Right ventricle myocardium inferior (tissue), 1 donor: ENCODE measurements at regions of chr1 and their contacts with region 1.

Region 1: DNA sequence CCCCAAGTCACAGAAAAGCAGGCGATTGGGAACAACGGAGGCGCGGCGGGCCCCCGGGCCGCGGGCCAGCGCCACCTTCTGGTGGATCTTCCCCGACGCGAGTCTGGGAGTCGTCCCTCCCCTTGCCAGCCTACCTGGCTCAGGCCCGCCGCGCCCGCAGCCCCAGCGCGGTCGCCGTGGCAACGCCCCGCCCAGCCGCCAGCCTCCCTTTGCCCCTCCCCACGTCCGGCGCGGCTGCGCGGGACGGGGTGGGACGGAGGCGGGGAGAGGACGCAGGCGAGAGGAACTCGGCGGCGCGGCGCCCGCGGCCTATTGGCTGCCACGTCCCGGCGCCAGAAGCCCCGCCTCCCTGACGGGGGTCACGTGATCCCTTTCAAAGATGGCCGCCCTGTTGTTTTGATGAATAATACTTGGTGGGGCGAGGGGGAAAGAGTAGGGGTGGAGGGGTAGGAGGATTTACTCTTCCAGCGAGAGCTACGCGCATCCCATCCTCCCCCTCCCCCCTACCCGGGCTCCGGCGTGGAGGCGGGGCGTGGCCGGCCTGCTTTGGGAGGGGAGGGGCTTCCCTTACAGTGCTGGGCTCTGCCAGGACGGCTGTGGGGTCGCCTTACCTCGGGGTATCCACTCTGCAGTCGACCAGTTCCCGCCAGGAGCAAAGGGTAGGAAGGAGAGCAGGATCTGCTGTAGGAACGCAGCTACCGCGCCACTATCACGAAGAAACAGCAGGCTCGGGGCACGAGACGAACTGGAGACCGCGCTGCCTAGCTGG is at the start of gene UBE4B:
- DNase-seq: peak; percentile 100
- ATAC-seq: peak; percentile 99
- total RNA-seq, gene UBE4B: 66.4 TPM

Region 2: GRCh38 chr1:9874959-9875635 is 157.7 kb before region 1 on chr1:
- intact Hi-C with region 1: loop called (anchors 5 kb)
- DNase-seq: no peak
- ATAC-seq: peak; percentile 67

Region 3: DNA sequence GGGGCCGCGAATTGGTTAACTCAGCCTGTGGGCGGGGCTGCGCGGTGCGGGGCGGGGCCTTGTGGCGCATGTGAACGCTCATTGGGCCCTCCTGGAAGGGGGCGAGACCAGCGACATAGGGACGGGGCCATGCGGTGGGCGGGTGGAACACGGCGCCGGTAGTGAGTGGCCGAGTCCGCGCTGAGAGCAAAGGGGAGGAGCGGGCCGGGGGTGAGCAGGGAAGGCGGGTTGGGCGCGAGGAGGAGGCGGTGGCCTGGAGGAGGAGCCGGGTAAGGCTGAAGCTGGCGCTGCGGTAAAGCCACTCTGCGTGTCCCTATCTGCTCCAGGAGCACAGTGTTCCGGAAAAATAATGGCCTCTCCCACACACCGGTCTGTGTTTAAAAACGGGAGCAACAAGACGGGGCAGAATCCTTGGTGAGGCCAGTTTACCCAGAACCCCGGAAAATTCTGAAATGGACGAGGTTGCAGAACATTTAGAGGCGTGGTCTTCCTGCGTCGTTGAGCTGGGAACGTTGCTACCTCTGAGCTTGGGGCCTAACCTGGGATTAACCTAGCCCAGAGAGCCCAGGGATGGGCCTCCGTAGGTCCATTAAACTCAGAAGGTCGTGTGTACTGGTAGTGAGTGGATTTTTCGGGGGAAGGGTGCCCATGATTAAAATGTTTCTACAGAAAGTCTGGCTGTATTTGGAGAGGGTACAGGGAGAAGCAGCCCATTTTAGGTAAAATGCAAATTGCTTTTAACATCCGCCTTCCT is 122.2 kb before region 1 on chr1:
- intact Hi-C with region 1: loop called (anchors 1 kb)
- DNase-seq: peak; percentile 100
- ATAC-seq: peak; percentile 99

Region 4: DNA sequence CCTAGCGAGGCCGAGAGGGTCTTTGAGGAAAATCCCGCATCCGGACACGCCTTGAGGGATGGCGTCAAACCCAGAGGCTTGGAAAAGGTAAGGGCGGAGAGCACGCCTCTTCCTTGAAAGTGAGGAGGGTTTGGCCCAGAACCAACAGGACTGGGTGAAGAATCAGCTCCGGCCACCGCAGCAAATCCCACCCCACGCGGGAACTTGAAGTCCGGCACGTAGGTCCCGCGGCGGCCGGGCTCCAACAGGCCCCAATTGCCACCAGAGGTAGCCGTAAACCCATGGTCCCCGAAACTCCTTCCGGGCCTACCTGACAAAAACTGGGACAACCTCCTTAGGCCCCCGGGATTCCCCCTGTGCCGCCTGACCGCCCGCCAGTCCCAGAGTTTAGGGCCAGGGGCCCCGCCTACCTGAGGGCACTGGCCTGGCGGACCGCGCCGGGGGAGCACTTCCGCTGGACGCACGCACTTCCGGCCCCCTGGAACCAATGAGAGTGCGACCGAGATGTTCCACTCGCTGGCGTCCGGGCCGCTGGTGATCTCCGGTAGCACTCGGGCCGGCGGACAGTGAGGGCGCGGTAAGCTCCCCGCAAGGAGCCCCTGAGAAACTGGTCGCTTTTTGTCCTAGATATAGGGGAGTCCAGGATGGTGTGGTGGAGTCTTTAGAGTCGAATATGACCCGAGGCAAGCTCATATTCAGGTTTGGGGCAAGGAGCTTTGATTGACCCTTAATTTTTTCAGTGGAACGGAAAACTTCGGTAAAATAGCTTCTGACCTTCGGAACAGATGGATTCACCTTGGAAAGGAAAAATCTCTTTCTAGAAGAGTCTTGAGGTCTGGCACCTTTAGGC is 89.6 kb before region 1 on chr1 and contains the starts of genes LZIC and NMNAT1:
- intact Hi-C with region 1: loop called (anchors 1 kb)
- DNase-seq: peak; percentile 96
- ATAC-seq: peak; percentile 99
- total RNA-seq, gene LZIC: 41.8 TPM
- total RNA-seq, gene NMNAT1: 19.3 TPM

Region 5: DNA sequence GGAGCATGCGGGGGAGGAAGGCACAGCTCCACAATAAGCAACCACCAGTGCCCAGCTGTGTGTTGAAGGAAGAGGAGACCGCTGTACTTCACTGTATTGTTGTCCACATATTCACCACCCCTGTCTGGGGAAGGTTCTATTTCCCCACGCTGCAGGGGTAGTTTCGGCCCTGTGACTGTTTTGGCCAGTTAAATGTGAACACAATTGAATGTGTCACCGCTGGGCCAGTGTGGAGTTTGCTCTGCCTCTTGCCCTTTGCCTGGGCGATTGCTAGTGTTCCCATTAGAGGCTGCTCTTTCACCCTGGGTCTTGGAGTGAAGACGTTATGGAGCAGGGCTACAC is 32.5 kb after region 1 on chr1:
- intact Hi-C with region 1: loop called (anchors 2 kb)
- DNase-seq: no peak
- ATAC-seq: no peak

Region 6: DNA sequence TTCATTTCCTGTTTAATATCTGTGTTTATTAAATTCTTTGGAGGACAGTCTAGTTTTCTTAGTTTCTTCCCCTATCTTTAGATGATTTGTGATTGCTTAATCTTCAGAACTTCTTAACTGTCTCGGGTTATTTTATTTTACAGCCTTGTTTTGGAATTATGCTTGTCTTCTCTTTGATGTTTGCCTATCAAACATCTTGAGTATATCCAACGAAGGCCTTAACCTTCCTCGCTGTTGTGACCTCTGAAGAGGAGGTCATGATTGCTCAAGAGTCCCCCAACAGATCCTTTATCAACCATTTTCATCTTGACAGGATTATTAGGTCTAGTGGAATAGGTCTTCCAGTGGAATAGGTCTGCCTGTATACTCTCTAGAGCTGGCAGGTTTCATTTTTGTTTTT is 45.7 kb after region 1 on chr1:
- intact Hi-C with region 1: no loop called
- DNase-seq: no peak
- ATAC-seq: no peak

Region 7: DNA sequence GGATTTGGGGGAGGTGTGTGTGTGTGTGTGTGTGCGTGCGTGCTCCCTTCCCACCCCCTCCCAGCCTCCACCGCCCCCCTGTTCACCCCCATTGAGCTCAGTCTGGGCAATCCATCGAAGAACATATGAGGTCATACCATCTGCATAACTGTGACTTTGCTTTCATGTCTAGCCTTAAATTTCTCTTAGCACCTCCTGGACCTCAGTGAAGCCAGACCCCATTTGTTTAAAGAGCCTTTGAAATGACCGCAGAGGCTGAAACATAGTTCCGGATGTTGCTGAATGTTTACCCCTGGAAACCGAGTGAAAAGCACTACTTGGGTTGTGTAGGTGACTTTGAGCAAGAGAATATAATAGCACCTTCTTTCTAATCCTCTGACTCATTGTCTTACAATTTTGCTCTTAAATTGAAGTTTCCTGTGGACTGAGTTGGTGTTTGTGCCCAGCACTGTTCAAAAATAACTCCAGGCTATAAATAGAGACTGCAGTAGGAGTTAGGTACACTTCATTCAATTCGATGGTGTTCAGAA is 75.4 kb after region 1 on chr1:
- intact Hi-C with region 1: loop called (anchors 2 kb)
- DNase-seq: no peak
- ATAC-seq: peak; percentile 61

Region 8: GRCh38 chr1:10295481-10296085 is 262.8 kb after region 1 on chr1:
- intact Hi-C with region 1: no loop called
- DNase-seq: no peak
- ATAC-seq: no peak